Sigmoid colon (tissue), 7 donors: ENCODE measurements at regions of chr7 and their contacts with region 1.

Region 1: DNA sequence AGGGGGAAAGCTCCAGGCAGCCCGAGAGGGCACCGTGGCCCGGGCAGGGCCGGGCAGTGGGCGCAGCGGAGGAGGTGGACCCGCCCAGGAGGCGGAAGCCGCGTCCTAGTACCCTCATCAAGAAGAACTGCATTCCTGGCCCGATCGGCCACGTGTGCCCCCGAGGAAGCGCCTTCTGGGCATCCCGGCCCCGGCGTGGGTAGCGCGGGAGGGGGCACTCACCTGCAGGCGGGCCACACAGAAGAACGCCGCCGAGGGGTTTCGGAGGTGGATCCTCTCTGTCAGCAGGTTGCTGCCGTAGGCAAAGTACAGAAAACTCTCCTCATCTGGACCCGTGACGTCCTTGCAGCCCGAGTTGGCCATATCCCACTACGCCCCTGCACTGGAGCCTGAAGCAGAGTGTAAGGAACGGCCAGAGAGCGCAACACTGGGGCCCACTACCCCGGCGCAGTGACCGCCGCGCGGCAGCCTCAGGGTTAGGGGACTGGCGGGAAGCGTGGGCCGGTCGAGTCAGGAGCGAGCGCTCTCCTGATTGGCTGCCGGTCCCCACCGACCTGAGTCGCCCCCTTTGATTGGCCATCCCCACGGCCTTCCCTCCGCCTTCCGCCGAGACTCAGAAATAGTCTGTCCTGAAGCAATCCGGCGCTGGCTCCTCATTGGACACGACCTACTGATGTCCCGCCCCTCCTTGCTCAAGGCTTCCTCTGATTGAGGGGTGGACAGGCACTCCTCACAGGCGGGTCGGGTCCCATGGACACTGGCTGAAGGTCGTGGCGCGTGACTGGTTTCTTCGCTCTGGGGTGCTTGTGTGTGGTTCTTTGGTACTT is at the start of gene GGCT:
- DNase-seq: peak; percentile 100
- H3K4me3 ChIP-seq: peak within 1 kb of the TSS; percentile 70 to 76 (median 74)
- H3K27ac ChIP-seq: peak within 1 kb of the TSS; percentile 80 to 88 (median 86)
- H3K4me1 ChIP-seq: peaks cover 0 to 24% (median 11%) of the 10 kb centered on the region in 4 donors
- H3K27me3 ChIP-seq: no peaks in the 10 kb centered on the region
- CTCF ChIP-seq: no peak
- EP300 ChIP-seq: no peak
- POLR2A ChIP-seq: peak; percentile 25 to 55
- total RNA-seq, gene GGCT: 18.8 to 40.9 (median 24.1) TPM

Region 2: GRCh38 chr7:30478349-30479201 is 26.0 kb before region 1 on chr7 and contains the start of gene NOD1:
- intact Hi-C with region 1: loop called (anchors 2 kb)
- DNase-seq: peak; percentile 86
- H3K4me3 ChIP-seq: peak within 1 kb of the TSS; percentile 63 to 79 (median 70)
- H3K27ac ChIP-seq: peak within 1 kb of the TSS; percentile 88 to 99 (median 90)
- H3K4me1 ChIP-seq: peaks cover 0 to 44% (median 32%) of the 10 kb centered on the region in 4 donors
- H3K27me3 ChIP-seq: no peaks in the 10 kb centered on the region
- CTCF ChIP-seq: no peak
- EP300 ChIP-seq: peak in 1 of 4 donors; percentile 4
- POLR2A ChIP-seq: peak; percentile 31 to 44
- total RNA-seq, gene NOD1: 5.9 to 17.5 (median 9.3) TPM